ENCODE measurements at regions of chr14 and their contacts with region 1.

Region 1: GRCh38 chr14:89416002-89416995 is 734 bp downstream of the FOXN3 start:
- DNase-seq: peak; percentile 99
- ATAC-seq: peak; percentile 90

Region 2: GRCh38 chr14:89040460-89041259 is 375.6 kb before region 1 on chr14:
- intact Hi-C with region 1: loop called (anchors 10 kb)
- DNase-seq: peak; percentile 92
- ATAC-seq: peak; percentile 96

Region 3: GRCh38 chr14:89178802-89179535 is 237.3 kb before region 1 on chr14:
- intact Hi-C with region 1: loop called (anchors 10 kb)
- DNase-seq: no peak
- ATAC-seq: no peak

Region 4: DNA sequence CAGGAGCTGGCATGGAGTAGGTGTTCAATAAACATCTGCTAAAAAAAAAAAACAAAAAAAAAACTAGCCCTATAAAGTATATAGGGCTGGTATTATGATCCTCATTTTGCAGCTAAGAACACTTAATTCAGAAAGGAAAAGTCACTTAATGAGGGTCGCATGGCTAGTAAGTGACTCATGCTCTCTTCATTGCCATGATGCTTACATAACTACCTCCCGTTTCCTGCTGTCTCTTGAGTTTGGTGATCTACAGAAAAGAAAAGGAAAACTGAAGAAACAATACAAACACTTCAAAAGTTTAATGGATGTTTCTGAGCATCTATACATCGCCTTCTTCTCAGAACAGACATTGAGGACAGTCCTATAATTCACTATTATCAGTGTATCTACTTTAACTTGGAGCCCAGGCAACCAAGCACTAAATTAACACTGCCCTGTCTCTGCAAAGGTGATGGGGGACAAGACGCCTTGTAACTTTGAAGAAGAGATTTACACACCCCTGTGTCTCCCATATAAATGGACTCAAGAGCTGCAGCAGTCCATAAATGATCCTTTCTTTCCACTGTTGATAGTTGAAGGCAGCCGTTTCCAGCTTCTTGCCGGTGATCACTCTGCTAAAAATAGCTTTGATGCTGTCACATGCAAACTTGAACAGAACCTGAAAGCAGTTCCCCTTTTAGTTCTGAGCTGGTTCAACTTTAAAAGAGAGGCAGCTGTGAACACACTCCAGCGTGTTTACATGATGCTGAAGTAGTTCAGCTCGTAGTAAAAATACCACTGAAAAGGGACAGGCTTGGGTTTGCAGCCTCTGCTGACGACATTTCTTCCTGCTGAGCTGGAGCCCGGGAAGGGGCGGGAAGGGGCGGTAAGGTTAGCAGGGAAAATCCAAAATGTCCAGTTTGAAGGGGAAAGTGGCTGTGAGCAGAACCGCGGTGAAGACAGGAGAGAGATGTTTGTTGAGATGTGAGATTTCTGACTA is 112.6 kb before region 1 on chr14:
- intact Hi-C with region 1: loop called (anchors 10 kb)
- DNase-seq: peak; percentile 61
- ATAC-seq: peak; percentile 79

Region 5: DNA sequence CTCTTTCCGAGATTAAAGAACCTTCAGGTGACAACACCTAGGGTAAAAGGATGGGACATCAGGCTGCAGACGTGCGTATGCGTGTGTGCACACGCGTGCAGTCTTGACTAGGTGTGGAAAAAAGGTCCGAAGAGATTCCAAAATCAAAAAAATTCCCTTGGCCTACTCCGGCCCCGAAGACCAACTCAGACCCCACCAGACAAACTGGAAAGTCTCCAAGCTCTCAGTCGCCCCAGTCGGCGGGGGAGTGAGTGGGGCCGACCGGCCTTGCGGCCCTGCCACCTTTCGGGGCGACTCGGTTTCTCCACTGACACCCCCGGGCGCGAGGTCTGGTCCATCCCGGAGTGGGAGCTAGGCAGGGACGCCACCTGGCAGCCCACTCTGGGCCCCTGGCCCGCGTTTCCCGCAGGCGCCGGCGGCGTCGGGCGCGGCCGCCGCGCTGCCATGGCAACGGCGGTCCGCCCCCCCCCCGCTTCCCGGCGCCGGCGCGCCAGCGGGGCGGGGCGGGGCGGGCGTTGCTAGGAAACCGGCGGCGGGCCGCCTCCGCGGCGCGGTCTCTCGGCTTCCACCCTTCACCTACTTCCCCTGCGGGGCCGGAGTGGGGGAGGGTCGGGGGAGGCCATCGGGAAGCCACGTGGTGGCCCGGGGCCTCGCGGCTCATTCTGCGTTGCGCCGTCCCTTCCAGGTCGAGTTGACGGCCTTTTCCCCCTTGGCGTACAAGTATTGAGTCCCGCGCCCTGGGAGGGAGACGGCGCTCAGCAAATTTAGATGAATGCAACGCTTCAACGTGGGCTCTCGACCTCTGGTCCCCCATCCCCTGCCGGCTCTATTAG is 285.1 kb after region 1 on chr14:
- intact Hi-C with region 1: loop called (anchors 5 kb)
- DNase-seq: peak; percentile 93
- ATAC-seq: peak; percentile 96

Measured in Right ventricle myocardium superior (tissue), 1 donor.